K562 (cell line): ENCODE measurements at regions of chr1 and their contacts with region 1.

Region 1: DNA sequence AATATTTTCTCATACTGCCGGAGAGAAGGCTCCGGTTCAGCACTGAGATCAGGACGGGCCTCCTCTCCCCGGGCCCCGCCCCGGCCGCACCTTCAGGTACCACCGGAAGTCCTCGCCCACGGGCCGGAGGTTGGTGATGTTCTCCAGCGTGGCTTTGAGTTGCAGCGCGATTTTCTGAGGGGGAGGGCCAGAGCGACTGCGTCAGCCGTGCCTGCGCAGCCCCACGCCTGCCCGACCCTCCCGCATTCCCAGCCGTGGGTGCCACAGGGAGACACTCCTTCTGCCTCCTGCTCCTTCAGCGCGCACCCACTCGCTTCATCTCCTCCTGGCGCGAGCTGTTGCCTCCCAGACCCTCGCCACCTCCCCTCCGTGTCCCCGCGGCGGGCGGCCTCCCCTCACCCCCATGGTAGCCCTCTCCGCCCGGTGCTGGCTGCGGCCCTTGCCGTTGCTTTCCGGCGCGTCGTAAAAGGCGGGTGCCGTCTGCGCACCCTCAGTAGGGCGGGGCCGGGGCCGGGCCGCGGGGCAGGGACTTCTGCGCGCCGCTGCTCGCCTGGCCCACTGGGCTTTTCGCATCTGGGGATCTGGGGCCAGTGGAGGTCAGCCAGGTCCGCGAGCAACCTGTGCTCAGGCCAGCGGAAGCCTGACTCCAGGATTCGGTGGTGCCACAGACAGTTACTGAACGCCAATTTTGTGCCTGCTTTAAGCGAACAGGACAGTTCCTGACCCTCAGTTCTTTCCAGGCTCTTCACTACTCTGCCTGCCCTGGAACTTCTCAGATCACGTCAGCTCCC is at the start of gene CZIB:
- DNase-seq: peak; percentile 95 to 98 (median 97)
- ATAC-seq: peak; percentile 96
- H3K4me3 ChIP-seq: peak within 1 kb of the TSS; percentile 69
- H3K27ac ChIP-seq: peak within 1 kb of the TSS; percentile 88
- H3K4me1 ChIP-seq: peaks cover 8% of the 10 kb centered on the region in 2 experiments; a peak in 3 of 5 replicates
- H3K27me3 ChIP-seq: no peaks in the 10 kb centered on the region
- CTCF ChIP-seq: 0 out of 6 replicates have a peak, but pooled peaks of 1 of the 3 experiments have one; percentile 4
- EP300 ChIP-seq: peak; percentile 39; the same call in 1 of the 2 replicates
- POLR2A ChIP-seq: peak; percentile 100
- RAD21 ChIP-seq: no peak
- polyA plus RNA-seq, gene CZIB: 97.4 to 111 TPM

Region 2: DNA sequence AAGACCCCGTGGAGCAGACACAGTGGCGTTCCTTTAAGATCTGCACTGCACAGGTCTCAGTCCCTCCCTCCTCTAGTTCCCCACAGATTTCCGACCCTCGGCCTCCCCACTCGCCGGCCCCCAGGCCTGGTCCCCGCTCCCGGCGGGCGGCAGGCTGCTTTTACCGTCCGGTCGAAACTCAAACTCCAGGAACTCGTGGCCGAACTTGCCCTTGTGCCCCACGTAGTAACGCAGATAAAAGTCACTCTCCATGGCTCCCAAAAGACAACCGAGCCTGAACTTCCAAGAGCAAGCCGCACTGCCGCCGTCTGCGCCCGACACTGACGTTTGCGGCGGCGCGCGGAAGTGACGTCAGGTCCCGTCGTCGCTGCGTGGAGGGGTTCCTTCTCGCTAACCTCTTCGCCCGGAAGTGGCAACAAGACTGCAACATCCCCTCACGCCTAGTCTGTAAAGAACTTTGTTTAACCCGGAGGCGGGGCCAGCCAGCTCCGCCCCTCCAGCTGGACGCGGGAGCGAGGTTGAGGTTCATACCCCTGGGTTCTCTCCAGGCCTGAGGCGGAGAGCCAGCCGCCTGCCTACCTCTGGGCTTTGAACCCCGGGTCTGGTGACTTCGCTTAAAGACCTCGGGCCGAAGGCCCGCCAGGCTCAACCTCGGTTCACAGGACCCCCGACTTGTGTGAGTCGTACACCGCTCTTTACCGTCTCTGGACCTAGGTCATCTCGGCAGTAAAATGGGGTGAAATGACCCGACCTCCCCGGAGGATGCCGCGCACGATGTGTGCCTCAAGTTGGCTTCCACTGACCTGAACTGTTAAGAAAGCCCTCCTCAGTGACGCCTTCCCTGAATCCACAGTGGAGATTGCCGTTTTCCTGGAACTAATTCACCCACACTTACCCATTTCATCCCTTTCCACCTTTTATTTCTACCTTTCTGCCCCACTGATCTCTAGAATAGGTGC is 18.1 kb after region 1 on chr1 and contains the start of gene MAGOH:
- CTCF ChIA-PET with region 1: no interaction called
- POLR2A ChIA-PET with region 1: interaction called, 21 read pairs
- in situ Hi-C with region 1: no loop called
- intact Hi-C with region 1: no loop called
- DNase-seq: peak; percentile 97 to 98 (median 97)
- ATAC-seq: peak; percentile 99
- H3K4me3 ChIP-seq: peak within 1 kb of the TSS; percentile 88
- H3K27ac ChIP-seq: peak within 1 kb of the TSS; percentile 83
- H3K4me1 ChIP-seq: peaks cover 12 to 14% of the 10 kb centered on the region in 2 experiments; a peak in 3 of 5 replicates
- H3K27me3 ChIP-seq: no peaks in the 10 kb centered on the region
- CTCF ChIP-seq: 0 out of 6 replicates have a peak, but pooled peaks of 1 of the 3 experiments have one; percentile 0
- EP300 ChIP-seq: peak; percentile 85
- POLR2A ChIP-seq: peak; percentile 93
- RAD21 ChIP-seq: no peak
- polyA plus RNA-seq, gene MAGOH: 132 to 342 TPM

Region 3: DNA sequence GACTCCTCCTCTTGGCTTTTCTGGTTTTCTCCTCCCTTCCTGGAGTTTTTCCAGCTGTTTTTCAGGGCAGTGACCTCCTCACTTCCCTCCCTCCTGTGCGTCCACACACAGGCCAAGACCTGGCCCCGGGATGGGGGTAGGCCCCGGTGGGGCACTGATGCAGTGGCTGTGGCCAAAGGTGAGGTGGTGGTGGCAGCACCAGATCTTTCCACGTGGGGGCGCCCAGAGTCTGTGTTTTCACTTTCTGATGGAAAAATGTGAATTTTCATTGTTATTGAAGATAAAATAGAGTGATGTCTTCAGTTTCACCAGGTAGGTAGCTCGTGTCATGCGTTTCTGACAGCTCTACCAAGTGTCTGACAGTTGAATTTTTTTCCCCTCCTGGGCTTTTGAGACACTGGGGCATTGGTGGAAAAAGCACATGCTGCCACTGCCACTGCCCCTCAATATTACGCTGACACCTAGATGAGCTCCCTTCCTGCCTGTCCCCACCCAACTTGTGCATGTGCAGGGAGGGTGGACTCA is 57.9 kb after region 1 on chr1:
- CTCF ChIA-PET with region 1: no interaction called
- POLR2A ChIA-PET with region 1: no interaction called
- in situ Hi-C with region 1: no loop called
- intact Hi-C with region 1: no loop called
- DNase-seq: peak; percentile 62 to 84 (median 81)
- ATAC-seq: peak; percentile 89
- H3K4me3 ChIP-seq: no peak overlapping the region
- H3K27ac ChIP-seq: no peak overlapping the region
- H3K4me1 ChIP-seq: peaks cover 6% of the 10 kb centered on the region in 2 experiments; a peak in 2 of 5 replicates
- H3K27me3 ChIP-seq: no peaks in the 10 kb centered on the region
- CTCF ChIP-seq: peak; percentile 79 to 95 (median 94)
- EP300 ChIP-seq: 0 out of 2 replicates have a peak, but pooled peaks have one; percentile 5
- POLR2A ChIP-seq: no peak
- RAD21 ChIP-seq: peak; percentile 96 to 97

Region 4: GRCh38 chr1:53450225-53450624 is 229.9 kb after region 1 on chr1:
- CTCF ChIA-PET with region 1: no interaction called
- POLR2A ChIA-PET with region 1: no interaction called
- in situ Hi-C with region 1: no loop called
- intact Hi-C with region 1: no loop called
- DNase-seq: peak; percentile 37 to 59 (median 58)
- ATAC-seq: peak; percentile 80
- H3K4me3 ChIP-seq: no peak overlapping the region
- H3K27ac ChIP-seq: no peak overlapping the region
- H3K4me1 ChIP-seq: peaks cover 0 to 5% of the 10 kb centered on the region in 2 experiments; a peak in 2 of 5 replicates
- H3K27me3 ChIP-seq: peaks cover 6 to 9% of the 10 kb centered on the region in 2 experiments; a peak in 3 of 5 replicates
- CTCF ChIP-seq: peak; percentile 56 to 66 (median 63)
- EP300 ChIP-seq: no peak
- POLR2A ChIP-seq: no peak
- RAD21 ChIP-seq: peak in 1 of 2 experiments; percentile 35; a peak in 1 of 4 replicates